ENCODE measurements at regions of chr1 and their contacts with region 1.

Region 1: DNA sequence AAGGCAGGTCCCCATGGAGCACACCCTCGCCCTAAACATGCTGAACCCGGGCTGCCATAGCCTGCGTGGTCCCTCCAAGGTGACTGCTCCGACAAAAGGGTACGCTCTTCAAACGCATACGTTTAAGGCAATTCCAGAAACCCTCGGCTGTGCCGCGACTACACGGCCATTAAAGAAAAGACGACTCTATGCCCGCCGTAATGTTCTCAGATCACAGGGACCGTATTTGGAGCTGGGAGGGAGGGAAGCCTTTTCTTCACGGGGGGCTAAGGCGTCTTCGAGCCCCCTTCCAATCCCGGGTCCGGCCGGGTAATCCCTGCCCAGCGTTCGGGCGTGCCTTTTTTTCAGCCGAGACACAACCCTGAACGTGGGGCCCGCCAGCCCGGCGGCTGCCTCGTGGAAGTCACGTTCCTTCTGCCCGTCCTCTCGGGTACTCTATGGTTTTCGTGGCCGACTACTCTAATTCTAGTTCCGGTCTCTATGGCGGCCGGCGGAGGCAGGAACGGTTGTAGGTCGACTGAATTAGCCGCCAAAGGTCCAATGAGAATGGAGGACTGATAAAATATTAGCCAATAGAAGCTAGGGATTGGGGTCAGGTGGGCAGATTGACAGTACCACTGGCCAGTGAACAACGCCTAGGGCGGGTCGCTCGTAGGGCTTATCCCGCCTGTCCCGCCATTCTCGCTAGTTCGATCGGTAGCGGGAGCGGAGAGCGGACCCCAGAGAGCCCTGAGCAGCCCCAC is at the start of gene YBX1:
- DNase-seq: peak; percentile 97 to 99 (median 97)
- H3K4me3 ChIP-seq: peak within 1 kb of the TSS; percentile 58 to 95 (median 85)
- H3K4me3 Mint-ChIP-seq: peak within 1 kb of the TSS; percentile 91 to 94
- H3K27ac ChIP-seq: peak within 1 kb of the TSS; percentile 78 to 92
- H3K27ac Mint-ChIP-seq: peak within 1 kb of the TSS; percentile 91 to 98 (median 96)
- H3K4me1 ChIP-seq: peaks cover 36 to 50% of the 10 kb centered on the region in 2 donors
- H3K4me1 Mint-ChIP-seq: peaks cover 49% of the 10 kb centered on the region
- H3K27me3 ChIP-seq: no peaks in the 10 kb centered on the region
- H3K27me3 Mint-ChIP-seq: no peaks in the 10 kb centered on the region
- CTCF ChIP-seq: no peak
- polyA plus RNA-seq, gene YBX1: 65.7 to 301 (median 70.2) TPM

Region 2: GRCh38 chr1:42456010-42456758 is 225.7 kb before region 1 on chr1 and contains the starts of genes PPCS and ZMYND12:
- intact Hi-C with region 1: loop called in 1 of 2 experiments (anchors 5 kb)
- DNase-seq: peak; percentile 77 to 89 (median 86)
- H3K4me3 ChIP-seq: peak within 1 kb of the TSS; percentile 64 to 91 (median 89)
- H3K4me3 Mint-ChIP-seq: peak within 1 kb of the TSS; percentile 92 to 96
- H3K27ac ChIP-seq: peak within 1 kb of the TSS; percentile 74 to 92
- H3K27ac Mint-ChIP-seq: peak within 1 kb of the TSS; percentile 93 to 98 (median 95)
- H3K4me1 ChIP-seq: peaks cover 14 to 28% of the 10 kb centered on the region in 2 donors
- H3K4me1 Mint-ChIP-seq: peaks cover 22% of the 10 kb centered on the region
- H3K27me3 ChIP-seq: no peaks in the 10 kb centered on the region
- H3K27me3 Mint-ChIP-seq: peaks cover 0 to 1% (median 0%) of the 10 kb centered on the region in 3 donors
- CTCF ChIP-seq: no peak
- polyA plus RNA-seq, gene PPCS: 43.2 to 182 (median 176) TPM
- polyA plus RNA-seq, gene ZMYND12: 0.76 to 1.3 (median 1.2) TPM

Region 3: DNA sequence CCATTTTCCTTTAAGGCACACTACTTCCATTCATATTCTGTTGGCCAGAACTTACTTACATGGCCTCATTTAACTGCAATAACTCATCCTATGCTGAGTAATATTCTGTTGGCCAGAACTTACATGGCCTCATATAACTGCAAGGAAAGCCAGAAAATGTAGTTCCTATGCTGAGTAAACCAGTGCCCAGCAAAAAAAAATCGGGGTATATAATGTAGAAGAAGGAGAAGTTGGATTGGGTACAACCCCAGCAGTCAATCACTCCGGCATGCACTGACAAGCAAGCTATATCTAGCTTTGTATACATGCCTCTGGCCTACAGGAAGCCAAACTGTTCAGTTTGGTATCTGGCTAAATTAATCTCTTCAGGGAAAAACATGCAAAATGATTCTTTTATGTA is 63.0 kb before region 1 on chr1:
- intact Hi-C with region 1: no loop called
- DNase-seq: no peak
- H3K4me3 ChIP-seq: no peak overlapping the region
- H3K4me3 Mint-ChIP-seq: no peak overlapping the region
- H3K27ac ChIP-seq: no peak overlapping the region
- H3K27ac Mint-ChIP-seq: no peak overlapping the region
- H3K4me1 ChIP-seq: no peaks in the 10 kb centered on the region
- H3K4me1 Mint-ChIP-seq: no peaks in the 10 kb centered on the region
- H3K27me3 ChIP-seq: no peaks in the 10 kb centered on the region
- H3K27me3 Mint-ChIP-seq: peaks cover 0 to 5% (median 0%) of the 10 kb centered on the region in 3 donors
- CTCF ChIP-seq: no peak

Region 4: DNA sequence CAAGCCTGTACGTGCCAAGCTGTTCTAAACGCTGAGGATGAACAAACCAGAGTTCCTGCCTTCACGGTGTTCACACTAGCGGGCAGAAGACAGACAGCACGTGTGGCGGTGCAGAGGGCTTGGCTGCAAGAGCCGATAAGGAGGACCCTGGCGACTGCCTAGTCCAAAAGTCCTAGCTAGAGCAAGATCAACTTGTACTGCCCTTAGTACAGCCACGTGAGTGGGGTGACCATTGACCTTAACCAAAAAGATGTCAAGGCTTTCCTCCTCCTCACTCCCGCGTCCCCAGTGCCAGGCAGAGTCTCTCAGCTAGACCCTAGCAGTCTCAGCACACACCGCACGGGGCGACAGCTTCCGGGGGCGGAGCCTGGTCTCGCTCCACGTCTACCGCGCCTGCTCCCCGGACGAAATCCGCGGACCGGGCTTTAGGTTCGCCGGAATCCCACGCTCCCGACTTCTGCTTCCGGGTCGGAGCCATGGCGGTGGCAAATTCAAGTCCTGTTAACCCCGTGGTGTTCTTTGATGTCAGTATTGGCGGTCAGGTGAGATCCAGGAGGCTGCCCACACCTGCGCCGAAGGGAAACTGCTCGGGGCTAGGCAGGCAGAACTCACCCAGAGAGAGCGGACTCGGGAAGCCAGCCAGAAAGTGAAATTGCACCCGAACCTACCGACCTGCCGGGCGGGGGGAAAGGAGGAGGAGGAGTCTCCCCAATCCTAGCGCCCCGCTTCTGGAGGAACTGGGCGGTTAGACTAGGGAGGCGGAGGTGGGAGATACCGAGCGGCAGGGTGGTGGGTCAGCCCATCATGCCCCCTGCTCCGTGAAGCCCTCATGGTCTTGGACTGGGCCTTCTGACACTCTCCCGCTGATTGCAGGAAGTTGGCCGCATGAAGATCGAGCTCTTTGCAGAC is 23.7 kb before region 1 on chr1 and contains the start of gene PPIH:
- intact Hi-C with region 1: loop called (anchors 2 kb)
- DNase-seq: peak; percentile 88 to 93 (median 89)
- H3K4me3 ChIP-seq: peak within 1 kb of the TSS; percentile 78 to 89 (median 84)
- H3K4me3 Mint-ChIP-seq: peak within 1 kb of the TSS; percentile 93 to 98
- H3K27ac ChIP-seq: peak within 1 kb of the TSS; percentile 57 to 82
- H3K27ac Mint-ChIP-seq: peak within 1 kb of the TSS; percentile 90 to 97 (median 91)
- H3K4me1 ChIP-seq: peaks cover 15 to 18% of the 10 kb centered on the region in 2 donors
- H3K4me1 Mint-ChIP-seq: peaks cover 20% of the 10 kb centered on the region
- H3K27me3 ChIP-seq: no peaks in the 10 kb centered on the region
- H3K27me3 Mint-ChIP-seq: peaks cover 0 to 5% (median 4%) of the 10 kb centered on the region in 3 donors
- CTCF ChIP-seq: no peak
- polyA plus RNA-seq, gene PPIH: 28.1 to 31.0 (median 28.8) TPM

Region 5: DNA sequence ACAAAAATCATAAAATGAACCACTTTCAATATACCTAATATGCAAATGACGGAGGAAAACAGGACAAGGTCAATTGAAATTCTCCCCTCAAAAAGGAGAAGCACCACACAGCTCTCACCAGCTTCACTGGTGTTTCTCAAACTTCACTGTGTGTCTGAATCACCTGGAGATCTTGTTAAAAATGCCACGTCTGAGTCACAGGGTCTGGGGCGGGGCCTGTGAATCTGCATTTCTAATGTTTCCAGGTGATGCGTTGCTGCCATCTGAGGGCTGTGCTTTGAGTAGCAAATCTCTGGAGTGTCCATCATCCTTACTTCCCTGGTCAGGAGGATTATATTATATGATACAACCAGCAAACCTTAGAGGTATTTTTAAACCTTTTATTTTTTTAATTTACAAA is 49.1 kb after region 1 on chr1:
- intact Hi-C with region 1: no loop called
- DNase-seq: peak in 1 of 3 donors; percentile 20
- H3K4me3 ChIP-seq: no peak overlapping the region
- H3K4me3 Mint-ChIP-seq: no peak overlapping the region
- H3K27ac ChIP-seq: no peak overlapping the region
- H3K27ac Mint-ChIP-seq: no peak overlapping the region
- H3K4me1 ChIP-seq: peaks cover under 1 to 2% of the 10 kb centered on the region in 2 donors
- H3K4me1 Mint-ChIP-seq: peaks cover under 1% of the 10 kb centered on the region
- H3K27me3 ChIP-seq: no peaks in the 10 kb centered on the region
- H3K27me3 Mint-ChIP-seq: peaks cover 0 to 1% (median 0%) of the 10 kb centered on the region in 3 donors
- CTCF ChIP-seq: no peak